Ovary (tissue), 10 donors: ENCODE measurements at regions of chr19 and their contacts with region 1.

Region 1: DNA sequence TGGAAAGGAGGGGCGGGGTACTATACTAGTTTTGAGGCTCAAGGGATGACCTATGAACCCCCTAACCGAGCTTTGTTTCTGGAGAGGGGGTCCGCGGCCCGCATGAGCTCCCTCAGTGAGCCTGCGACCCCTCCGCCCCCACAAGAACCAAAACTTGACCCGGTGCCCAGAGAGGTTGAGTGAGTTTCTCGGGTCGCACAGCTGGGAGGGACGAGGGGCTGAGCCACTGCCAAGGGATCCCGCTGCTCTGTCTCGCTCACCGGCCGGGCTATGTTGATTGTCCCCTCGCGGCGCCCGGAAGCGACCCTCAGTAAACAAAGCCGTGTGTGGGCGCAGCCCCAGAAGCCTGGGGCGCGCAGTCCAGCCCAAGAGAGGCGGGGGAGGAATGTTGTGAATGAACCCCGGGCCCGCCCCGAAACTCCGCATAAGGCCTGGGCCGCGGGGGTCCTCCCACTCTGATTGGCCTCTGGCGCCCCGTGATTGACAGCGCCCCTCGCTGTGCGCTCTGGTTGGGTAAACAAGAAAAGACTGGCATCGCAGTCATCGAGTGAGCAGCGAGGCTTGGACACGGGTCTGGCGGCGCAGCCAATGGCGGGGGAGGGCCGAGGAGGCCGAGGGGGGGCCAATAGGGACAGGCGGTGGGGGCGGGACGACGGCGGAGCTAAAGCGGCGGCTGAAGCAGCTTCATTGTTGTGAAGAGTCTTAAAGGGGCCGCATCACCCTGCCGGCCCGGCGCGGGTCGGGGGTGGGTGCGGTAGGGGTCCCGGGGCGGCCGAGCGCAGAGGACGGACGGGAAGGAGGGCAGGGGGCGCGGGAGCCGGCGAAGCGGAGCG is at the start of gene ZSWIM4:
- DNase-seq: peak; percentile 97 to 99 (median 99)
- H3K4me3 ChIP-seq: peak within 1 kb of the TSS; percentile 86
- H3K27ac ChIP-seq: peak within 1 kb of the TSS; percentile 67 to 74
- H3K4me1 ChIP-seq: peaks cover 2% of the 10 kb centered on the region
- H3K27me3 ChIP-seq: no peaks in the 10 kb centered on the region
- CTCF ChIP-seq: no peak
- EP300 ChIP-seq: no peak
- POLR2A ChIP-seq: peak; percentile 55
- total RNA-seq, gene ZSWIM4: 2.6 to 7.9 (median 4.6) TPM

Region 2: GRCh38 chr19:13505761-13506470 is 289.1 kb before region 1 on chr19:
- intact Hi-C with region 1: no loop called
- DNase-seq: no peak
- H3K4me3 ChIP-seq: no peak overlapping the region
- H3K27ac ChIP-seq: no peak overlapping the region
- H3K4me1 ChIP-seq: no peaks in the 10 kb centered on the region
- H3K27me3 ChIP-seq: no peaks in the 10 kb centered on the region
- CTCF ChIP-seq: no peak
- EP300 ChIP-seq: no peak
- POLR2A ChIP-seq: no peak

Region 3: DNA sequence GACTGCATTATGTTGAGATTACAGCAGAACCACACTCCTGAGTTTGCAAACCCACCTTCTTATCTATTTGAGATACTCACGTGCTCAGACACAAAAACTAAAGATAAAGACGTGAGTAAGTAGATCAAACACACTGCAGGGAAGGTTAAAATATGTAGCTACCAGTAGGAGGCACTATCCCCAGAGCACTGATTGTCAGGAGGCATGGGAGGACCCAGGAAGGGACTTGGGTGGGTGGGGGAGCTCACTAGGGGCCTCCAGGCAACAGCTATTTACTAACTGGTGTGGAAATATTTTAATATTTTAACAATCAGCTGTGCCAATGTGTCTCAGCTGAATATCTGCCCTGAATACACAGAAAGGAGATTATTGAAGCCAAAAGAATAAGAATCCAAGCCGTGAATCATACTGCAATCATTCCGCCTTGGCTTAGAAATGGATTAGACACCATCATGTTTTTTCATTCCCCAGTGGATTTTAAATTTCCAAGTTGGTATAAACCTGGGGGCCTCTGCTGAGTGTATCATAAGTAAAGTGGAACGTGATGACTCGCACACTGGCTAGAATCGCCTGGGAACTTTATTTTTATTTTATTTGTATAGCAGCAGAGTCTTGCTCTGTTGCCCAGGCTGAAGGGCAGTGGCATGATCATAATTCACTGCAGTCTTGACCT is 215.4 kb before region 1 on chr19:
- intact Hi-C with region 1: no loop called
- DNase-seq: no peak
- H3K4me3 ChIP-seq: no peak overlapping the region
- H3K27ac ChIP-seq: no peak overlapping the region
- H3K4me1 ChIP-seq: no peaks in the 10 kb centered on the region
- H3K27me3 ChIP-seq: no peaks in the 10 kb centered on the region
- CTCF ChIP-seq: no peak
- EP300 ChIP-seq: no peak
- POLR2A ChIP-seq: no peak

Region 4: GRCh38 chr19:13652810-13653590 is 142.0 kb before region 1 on chr19:
- intact Hi-C with region 1: no loop called
- DNase-seq: no peak
- H3K4me3 ChIP-seq: no peak overlapping the region
- H3K27ac ChIP-seq: no peak overlapping the region
- H3K4me1 ChIP-seq: no peaks in the 10 kb centered on the region
- H3K27me3 ChIP-seq: no peaks in the 10 kb centered on the region
- CTCF ChIP-seq: no peak
- EP300 ChIP-seq: no peak
- POLR2A ChIP-seq: no peak

Region 5: DNA sequence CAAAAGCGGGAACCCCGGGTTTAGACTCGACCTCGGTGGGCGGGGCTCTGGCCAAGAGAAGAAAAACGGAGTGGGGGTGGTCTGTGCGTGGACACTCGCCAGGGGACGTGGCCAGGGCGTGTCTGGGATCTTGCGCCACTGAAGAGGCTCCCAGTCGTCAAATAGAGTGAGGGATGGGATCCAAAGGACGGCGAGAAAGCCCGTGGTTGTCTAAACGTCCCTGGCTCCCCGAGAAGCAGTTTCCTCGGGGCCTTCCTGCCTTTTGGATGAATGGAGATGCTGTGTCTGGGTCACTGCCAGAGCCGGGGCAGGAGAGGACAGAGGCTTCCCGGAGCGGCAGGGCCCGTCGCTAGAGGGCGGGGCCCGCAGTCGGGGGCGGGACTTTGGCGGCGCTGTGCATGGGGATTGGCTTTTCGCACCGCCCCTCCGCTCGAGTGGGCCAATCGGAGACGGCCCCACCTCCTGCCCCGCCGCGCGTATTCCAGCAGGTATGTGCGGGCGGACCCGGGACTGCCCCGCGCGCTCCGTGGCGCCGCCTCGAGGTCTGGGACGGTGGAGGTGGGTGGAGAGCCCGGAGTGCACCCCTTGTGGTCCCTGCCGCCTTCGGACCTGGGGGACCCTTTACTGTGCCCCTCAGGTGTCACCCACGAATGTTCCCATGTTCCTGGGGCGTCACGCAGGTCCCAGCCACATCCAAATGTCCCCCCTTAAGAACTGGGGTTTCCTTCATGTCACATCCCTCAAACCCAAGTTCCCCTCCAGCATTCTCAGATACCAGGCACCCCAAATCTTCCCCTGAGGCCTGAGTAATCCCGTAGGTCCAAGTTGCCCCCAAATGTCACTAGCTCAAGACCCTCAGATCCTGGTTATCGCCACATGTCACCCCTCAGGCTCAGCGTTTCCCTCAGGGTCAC is 38.6 kb after region 1 on chr19:
- intact Hi-C with region 1: loop called in 2 of 4 experiments (anchors 5 kb)
- DNase-seq: peak; percentile 95 to 98 (median 97)
- H3K4me3 ChIP-seq: peak overlapping the region; percentile 22
- H3K27ac ChIP-seq: peak overlapping the region; percentile 60 to 83
- H3K4me1 ChIP-seq: peaks cover 4% of the 10 kb centered on the region
- H3K27me3 ChIP-seq: no peaks in the 10 kb centered on the region
- CTCF ChIP-seq: peak in 2 of 3 donors; percentile 52 to 53
- EP300 ChIP-seq: no peak
- POLR2A ChIP-seq: no peak

Region 6: GRCh38 chr19:13846557-13847406 is 51.8 kb after region 1 on chr19:
- intact Hi-C with region 1: loop called in 2 of 4 experiments (anchors 5 to 10 kb)
- DNase-seq: peak; percentile 94 to 97 (median 96)
- H3K4me3 ChIP-seq: peak overlapping the region; percentile 62
- H3K27ac ChIP-seq: peak overlapping the region; percentile 98 to 99
- H3K4me1 ChIP-seq: peaks cover 14% of the 10 kb centered on the region
- H3K27me3 ChIP-seq: no peaks in the 10 kb centered on the region
- CTCF ChIP-seq: no peak
- EP300 ChIP-seq: peak; percentile 23
- POLR2A ChIP-seq: no peak